ENCODE measurements at regions of chr2 and their contacts with region 1.

Region 1: GRCh38 chr2:158456309-158457066 is at the starts of genes CCDC148 and PKP4:
- DNase-seq: peak; percentile 94
- H3K4me3 Mint-ChIP-seq: peak within 1 kb of the TSS; percentile 95
- H3K27ac Mint-ChIP-seq: peak within 1 kb of the TSS; percentile 79
- H3K4me1 Mint-ChIP-seq: peaks cover 24% of the 10 kb centered on the region
- H3K27me3 Mint-ChIP-seq: no peaks in the 10 kb centered on the region
- total RNA-seq, gene CCDC148: not detected
- total RNA-seq, gene PKP4: 52.9 to 57.0 TPM

Region 2: GRCh38 chr2:157336137-157337010 is 1120.1 kb before region 1 on chr2:
- CTCF ChIA-PET with region 1: no interaction called
- intact Hi-C with region 1: loop called (anchors 5 kb)
- DNase-seq: peak; percentile 68
- H3K4me3 Mint-ChIP-seq: peak overlapping the region; percentile 40
- H3K27ac Mint-ChIP-seq: no peak overlapping the region
- H3K4me1 Mint-ChIP-seq: peaks cover 78% of the 10 kb centered on the region
- H3K27me3 Mint-ChIP-seq: no peaks in the 10 kb centered on the region

Region 3: GRCh38 chr2:157559061-157559460 is 897.4 kb before region 1 on chr2:
- CTCF ChIA-PET with region 1: no interaction called
- intact Hi-C with region 1: no loop called
- DNase-seq: no peak
- H3K4me3 Mint-ChIP-seq: no peak overlapping the region
- H3K27ac Mint-ChIP-seq: no peak overlapping the region
- H3K4me1 Mint-ChIP-seq: peaks cover 31% of the 10 kb centered on the region
- H3K27me3 Mint-ChIP-seq: no peaks in the 10 kb centered on the region

Region 4: DNA sequence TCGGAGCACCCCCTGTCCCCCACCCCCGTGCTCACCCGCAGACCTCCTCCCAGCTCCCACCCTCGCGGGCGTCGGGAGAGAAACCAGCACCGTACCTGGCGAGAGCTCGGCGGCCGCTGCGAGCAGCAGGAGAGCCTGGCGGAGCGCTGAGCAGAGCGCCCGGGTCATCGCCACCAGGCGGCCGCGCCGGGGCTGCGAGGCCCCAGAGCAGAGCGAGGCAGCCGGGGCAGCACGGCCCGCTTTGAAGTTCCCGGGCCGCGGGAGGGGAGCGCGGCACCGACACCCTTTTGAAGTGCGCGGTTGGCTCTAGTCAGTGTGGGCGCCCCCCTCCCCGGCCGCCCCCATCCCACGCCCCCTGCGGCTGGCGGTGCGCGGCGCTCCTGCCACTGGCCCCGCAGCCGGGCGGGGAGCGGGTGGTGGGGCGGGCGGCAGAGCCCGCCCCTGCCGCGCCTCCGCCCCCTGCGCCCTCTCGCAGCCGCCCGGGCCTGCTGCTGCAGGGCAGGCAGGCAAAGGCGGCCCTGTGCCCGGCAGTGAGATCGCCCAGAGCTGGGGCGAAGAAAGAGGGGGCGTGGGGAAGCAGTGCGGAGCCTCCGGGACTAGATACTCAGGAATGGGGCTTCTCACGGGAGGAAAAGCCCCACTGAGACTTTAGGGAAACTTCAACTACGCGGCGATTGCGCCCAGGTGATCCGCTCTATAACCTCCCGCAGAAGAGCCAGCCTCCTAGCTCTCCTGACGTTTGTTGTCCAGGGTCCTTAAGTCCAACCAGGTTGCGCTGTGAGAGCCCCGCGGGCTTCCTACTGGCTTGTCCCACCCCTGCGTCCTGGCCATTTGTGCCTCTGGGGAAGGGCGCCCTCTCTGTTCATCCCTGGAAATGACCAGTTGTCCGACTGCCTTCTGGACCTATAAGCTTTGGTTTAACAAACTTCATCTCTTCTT is 827.7 kb before region 1 on chr2 and contains the start of gene ACVR1C:
- CTCF ChIA-PET with region 1: no interaction called
- intact Hi-C with region 1: loop called (anchors 2 kb)
- DNase-seq: peak; percentile 83
- H3K4me3 Mint-ChIP-seq: peak within 1 kb of the TSS; percentile 94
- H3K27ac Mint-ChIP-seq: no peak within 1 kb of the TSS
- H3K4me1 Mint-ChIP-seq: peaks cover 37% of the 10 kb centered on the region
- H3K27me3 Mint-ChIP-seq: peaks cover 2% of the 10 kb centered on the region
- total RNA-seq, gene ACVR1C: 3.5 to 3.6 TPM

Region 5: DNA sequence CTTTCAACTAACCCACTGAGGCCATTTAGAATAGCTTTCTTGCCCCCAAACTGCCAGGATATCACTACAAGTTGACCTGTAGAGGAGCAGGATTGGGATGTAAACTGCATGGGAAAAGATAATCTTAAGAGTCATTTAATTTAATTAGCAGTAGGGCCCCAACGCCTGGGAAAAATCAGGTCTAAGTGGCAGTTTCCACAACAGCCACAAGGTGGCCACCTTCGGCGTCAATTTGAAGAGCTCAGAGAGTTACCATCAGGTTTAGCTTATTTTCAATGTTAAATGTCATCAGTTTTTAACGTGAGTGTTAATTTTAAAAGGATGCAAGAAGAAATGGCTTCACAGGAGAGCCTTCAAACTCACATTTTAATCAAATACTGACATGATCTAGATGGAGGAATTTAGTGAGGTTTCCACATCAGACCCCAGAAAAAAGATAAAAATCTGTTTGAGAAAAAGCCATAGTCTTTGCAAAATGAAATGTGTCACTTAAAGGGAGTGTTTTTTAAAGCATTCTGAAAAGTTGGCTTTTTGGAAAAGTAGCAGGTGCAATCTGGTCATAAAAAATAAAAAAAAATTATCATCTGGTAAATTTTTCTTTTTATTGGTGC is 432.1 kb before region 1 on chr2:
- CTCF ChIA-PET with region 1: no interaction called
- intact Hi-C with region 1: loop called (anchors 5 kb)
- DNase-seq: peak; percentile 76
- H3K4me3 Mint-ChIP-seq: no peak overlapping the region
- H3K27ac Mint-ChIP-seq: no peak overlapping the region
- H3K4me1 Mint-ChIP-seq: peaks cover 7% of the 10 kb centered on the region
- H3K27me3 Mint-ChIP-seq: no peaks in the 10 kb centered on the region

Region 6: GRCh38 chr2:158366342-158366741 is 90.1 kb before region 1 on chr2:
- CTCF ChIA-PET with region 1: no interaction called
- intact Hi-C with region 1: no loop called
- DNase-seq: no peak
- H3K4me3 Mint-ChIP-seq: no peak overlapping the region
- H3K27ac Mint-ChIP-seq: no peak overlapping the region
- H3K4me1 Mint-ChIP-seq: no peaks in the 10 kb centered on the region
- H3K27me3 Mint-ChIP-seq: no peaks in the 10 kb centered on the region

Region 7: DNA sequence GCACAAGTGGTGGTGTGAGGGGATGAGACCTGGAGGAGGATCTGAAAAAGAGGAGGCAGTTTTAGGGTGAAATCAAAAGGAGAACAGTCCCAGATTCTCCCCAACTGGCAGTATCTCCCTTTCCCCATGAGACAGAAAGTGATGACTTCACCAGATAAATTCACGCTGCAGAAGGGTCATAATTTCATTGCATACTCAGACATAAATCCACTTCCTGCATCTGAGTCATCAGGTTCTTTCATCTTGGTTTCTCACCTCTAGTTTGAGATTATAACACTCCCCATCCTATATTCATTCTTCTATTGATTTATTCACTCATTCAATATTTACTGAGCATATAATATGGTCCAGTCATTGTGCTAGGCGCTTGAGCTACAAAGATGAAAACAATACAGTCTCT is 64.6 kb before region 1 on chr2:
- CTCF ChIA-PET with region 1: no interaction called
- intact Hi-C with region 1: loop called (anchors 2 kb)
- DNase-seq: peak; percentile 5
- H3K4me3 Mint-ChIP-seq: no peak overlapping the region
- H3K27ac Mint-ChIP-seq: no peak overlapping the region
- H3K4me1 Mint-ChIP-seq: peaks cover 7% of the 10 kb centered on the region
- H3K27me3 Mint-ChIP-seq: peaks cover 13% of the 10 kb centered on the region

Region 8: GRCh38 chr2:158723917-158724690 is 267.6 kb after region 1 on chr2:
- CTCF ChIA-PET with region 1: no interaction called
- intact Hi-C with region 1: no loop called
- DNase-seq: no peak
- H3K4me3 Mint-ChIP-seq: no peak overlapping the region
- H3K27ac Mint-ChIP-seq: no peak overlapping the region
- H3K4me1 Mint-ChIP-seq: no peaks in the 10 kb centered on the region
- H3K27me3 Mint-ChIP-seq: no peaks in the 10 kb centered on the region

Region 9: GRCh38 chr2:159286709-159287441 is 830.4 kb after region 1 on chr2:
- CTCF ChIA-PET with region 1: no interaction called
- intact Hi-C with region 1: loop called (anchors 5 kb)
- DNase-seq: peak; percentile 97
- H3K4me3 Mint-ChIP-seq: peak overlapping the region; percentile 87
- H3K27ac Mint-ChIP-seq: peak overlapping the region; percentile 75
- H3K4me1 Mint-ChIP-seq: peaks cover 26% of the 10 kb centered on the region
- H3K27me3 Mint-ChIP-seq: no peaks in the 10 kb centered on the region